Posterior cingulate gyrus (tissue), 11 donors: ENCODE measurements at regions of chr1 and their contacts with region 1.

Region 1: GRCh38 chr1:15617175-15617880 is at the start of gene DDI2:
- DNase-seq: peak; percentile 83 to 99 (median 93)

Region 2: DNA sequence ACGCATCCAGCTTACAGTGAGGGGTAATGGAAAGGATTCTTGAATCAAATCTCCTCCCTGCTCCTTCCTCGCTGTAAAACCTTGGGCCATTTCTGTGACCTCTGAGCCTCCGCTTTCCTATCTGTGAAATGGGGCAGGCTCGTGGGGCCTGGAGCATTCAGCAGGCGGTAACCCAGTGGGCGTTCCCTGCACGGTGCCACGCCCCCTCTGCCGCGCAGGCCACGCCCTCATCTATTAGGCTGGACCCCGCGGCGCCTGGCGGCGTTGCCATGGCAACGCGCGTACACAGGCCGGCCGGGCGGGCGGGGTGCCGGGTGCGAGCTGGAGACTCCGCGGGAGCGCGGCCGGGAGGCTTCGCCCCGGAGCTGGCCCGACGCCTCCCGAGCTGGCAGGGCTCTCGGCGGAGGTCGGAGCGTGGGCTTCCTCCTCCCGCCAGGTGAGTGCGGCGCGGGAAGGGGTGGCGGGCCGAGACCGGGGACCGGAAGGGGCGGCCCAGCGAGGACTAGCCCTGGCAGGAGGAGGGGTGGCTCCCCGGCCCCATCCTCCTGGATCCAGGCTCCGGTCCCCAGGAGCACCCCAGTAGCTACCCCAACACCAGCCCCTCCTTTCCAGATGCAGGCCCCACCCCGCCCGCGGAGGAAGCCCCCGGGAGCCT is 370.2 kb before region 1 on chr1 and contains the start of gene FHAD1:
- intact Hi-C with region 1: no loop called
- DNase-seq: peak in 4 of 10 donors; percentile 29 to 83 (median 60)

Region 3: DNA sequence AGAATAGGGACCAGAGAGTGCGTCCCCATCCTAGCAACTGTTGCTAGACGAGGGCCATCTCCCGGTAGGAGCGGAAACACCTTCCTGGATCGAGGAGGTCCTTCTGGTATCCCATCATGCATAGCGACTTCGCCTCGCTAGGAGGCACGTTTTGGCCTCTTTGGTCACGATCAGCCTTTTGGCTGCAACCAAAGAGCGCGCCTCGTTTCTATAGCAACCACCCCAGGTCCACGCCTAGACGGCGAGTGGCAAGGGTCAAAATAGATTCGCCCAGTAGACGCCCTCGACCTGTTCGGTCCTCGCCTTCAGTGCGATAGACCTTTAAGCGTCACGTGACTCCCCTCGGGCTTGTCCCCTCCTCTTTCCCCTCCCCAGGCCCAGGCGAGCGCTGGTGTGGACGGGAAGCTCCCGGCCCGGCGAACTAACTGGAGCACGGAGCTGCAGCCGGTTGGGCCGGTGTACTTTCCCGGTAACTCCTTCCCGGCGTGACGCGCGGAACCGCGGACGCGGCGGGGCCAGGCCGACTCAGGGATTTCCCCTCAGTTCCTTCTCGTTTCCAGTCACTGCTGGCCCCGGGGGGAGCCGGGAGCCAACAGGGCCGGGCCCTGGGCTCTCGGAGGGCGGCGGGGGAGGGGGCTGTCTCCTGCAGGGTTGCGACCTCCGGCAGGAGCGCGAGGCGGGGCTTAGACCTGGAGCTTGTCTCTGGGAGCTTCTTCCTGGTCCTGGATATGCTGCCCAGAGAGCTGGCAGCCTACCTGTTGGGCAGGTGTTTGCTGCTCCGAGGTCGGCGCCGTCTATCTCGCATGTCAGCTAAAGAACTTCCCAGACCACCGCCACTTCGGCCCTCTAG is 90.6 kb before region 1 on chr1 and contains the start of gene DNAJC16:
- intact Hi-C with region 1: loop called (anchors 2 kb)
- DNase-seq: peak; percentile 97 to 100 (median 99)

Region 4: GRCh38 chr1:15557594-15557993 is 59.7 kb before region 1 on chr1:
- intact Hi-C with region 1: no loop called
- DNase-seq: peak in 1 of 10 donors; percentile 9

Region 5: GRCh38 chr1:15603050-15603965 is 14.0 kb before region 1 on chr1:
- intact Hi-C with region 1: loop called (anchors 1 kb)
- DNase-seq: peak; percentile 95 to 100 (median 97)

Region 6: GRCh38 chr1:15684468-15685291 is 67.4 kb after region 1 on chr1:
- intact Hi-C with region 1: loop called (anchors 10 kb)
- DNase-seq: peak in 5 of 10 donors; percentile 33 to 88 (median 83)